ENCODE measurements at regions of chrX and their contacts with region 1.

Region 1: GRCh38 chrX:53683556-53684414 is 2.7 kb downstream of the HUWE1 start:
- DNase-seq: peak; percentile 97
- ATAC-seq: peak; percentile 75
- H3K4me3 ChIP-seq: peak overlapping the region; percentile 72 to 78 (median 74); a peak in 5 of 6 replicates
- H3K27ac ChIP-seq: peak overlapping the region; percentile 95
- H3K4me1 ChIP-seq: peaks cover 24% of the 10 kb centered on the region
- H3K27me3 ChIP-seq: no peaks in the 10 kb centered on the region; a peak in 1 of 5 replicates
- CTCF ChIP-seq: peak; percentile 42
- EP300 ChIP-seq: no peak
- POLR2A ChIP-seq: peak; percentile 63 to 75
- RAD21 ChIP-seq: no peak

Region 2: GRCh38 chrX:53831662-53832635 is 148.2 kb after region 1 on chrX:
- CTCF ChIA-PET with region 1: no interaction called
- POLR2A ChIA-PET with region 1: no interaction called
- in situ Hi-C with region 1: loop called (anchors 10 kb)
- intact Hi-C with region 1: no loop called
- DNase-seq: peak; percentile 20
- ATAC-seq: peak; percentile 80
- H3K4me3 ChIP-seq: no peak overlapping the region
- H3K27ac ChIP-seq: no peak overlapping the region
- H3K4me1 ChIP-seq: no peaks in the 10 kb centered on the region
- H3K27me3 ChIP-seq: no peaks in the 10 kb centered on the region
- CTCF ChIP-seq: peak; percentile 65
- EP300 ChIP-seq: no peak
- POLR2A ChIP-seq: no peak
- RAD21 ChIP-seq: peak; percentile 24; the same call in 1 of the 2 replicates

Measured in HepG2 (cell line).